ENCODE measurements at regions of chr10 and their contacts with region 1.

Region 1: DNA sequence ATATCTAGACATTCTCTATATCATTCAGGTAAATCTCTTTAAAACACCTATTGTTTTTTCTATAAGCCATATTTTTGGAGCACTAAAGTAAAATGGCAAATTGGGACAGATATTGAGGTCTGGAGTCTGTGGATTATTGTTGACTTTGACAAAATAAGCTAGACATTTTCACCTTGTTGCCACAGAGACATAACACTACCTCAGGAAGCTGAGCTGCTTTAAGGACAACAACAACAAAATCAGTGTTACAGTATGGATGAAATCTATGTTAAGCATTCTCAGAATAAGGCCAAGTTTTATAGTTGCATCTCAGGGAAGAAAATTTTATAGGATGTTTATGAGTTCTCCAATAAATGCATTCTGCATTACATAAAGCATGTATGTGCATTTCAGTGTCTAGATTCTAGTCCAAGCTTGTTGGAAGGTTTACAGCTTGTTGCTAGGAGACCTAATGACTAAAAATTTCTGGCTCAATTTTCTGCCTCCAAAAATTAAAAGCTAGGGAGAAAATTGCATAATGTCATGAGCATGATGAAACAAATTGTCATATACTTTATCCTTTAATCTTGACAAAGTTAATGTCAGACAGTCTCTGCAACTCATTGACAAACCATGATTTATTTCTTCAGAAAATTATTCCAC is 18.3 kb downstream of the LIPM start:
- DNase-seq: no peak
- H3K4me3 ChIP-seq: no peak overlapping the region
- H3K27ac ChIP-seq: no peak overlapping the region
- H3K4me1 ChIP-seq: no peaks in the 10 kb centered on the region
- H3K27me3 ChIP-seq: no peaks in the 10 kb centered on the region
- CTCF ChIP-seq: no peak
- EP300 ChIP-seq: no peak
- POLR2A ChIP-seq: no peak

Region 2: GRCh38 chr10:88721392-88721791 is 99.5 kb before region 1 on chr10:
- in situ Hi-C with region 1: no loop called
- intact Hi-C with region 1: no loop called
- DNase-seq: no peak
- H3K4me3 ChIP-seq: no peak overlapping the region
- H3K27ac ChIP-seq: no peak overlapping the region
- H3K4me1 ChIP-seq: no peaks in the 10 kb centered on the region
- H3K27me3 ChIP-seq: no peaks in the 10 kb centered on the region
- CTCF ChIP-seq: no peak
- EP300 ChIP-seq: no peak
- POLR2A ChIP-seq: no peak

Region 3: DNA sequence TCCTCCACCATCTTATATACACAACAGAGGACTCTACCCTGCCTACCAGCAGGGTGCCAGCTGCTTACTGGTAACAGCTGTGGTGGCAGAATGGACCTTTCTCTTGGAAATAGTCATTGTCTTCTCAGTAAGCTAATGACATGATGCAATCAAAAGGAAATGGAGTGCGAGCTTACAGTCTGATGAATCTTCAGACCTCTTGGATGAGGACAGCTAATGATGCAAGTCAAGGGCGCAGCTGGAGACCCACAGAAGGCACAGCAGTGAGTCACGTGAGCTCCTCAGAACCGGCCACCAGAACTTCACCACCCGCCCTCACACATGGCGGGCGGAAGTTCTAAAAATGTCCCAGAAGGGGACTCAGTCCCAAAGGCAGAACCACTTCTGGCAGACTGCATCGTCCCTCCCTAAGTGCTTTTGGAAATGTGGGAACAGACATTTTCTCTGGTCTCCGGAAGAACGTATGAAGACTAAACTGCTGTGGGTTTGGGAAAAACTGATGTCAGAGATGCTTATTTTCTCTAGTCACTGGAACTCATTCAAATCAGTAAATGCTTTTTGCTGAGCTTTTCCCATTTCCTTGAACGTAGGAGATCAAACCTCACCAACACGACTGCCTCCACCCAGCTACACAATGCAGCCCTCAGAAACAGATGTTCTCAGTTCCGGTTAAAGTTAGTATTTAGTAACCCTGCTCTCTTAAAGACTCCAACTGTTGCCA is 266.1 kb after region 1 on chr10:
- in situ Hi-C with region 1: no loop called
- intact Hi-C with region 1: loop called (anchors 5 kb)
- DNase-seq: peak; percentile 35
- H3K4me3 ChIP-seq: no peak overlapping the region
- H3K27ac ChIP-seq: peak overlapping the region; percentile 46 to 69 (median 54)
- H3K4me1 ChIP-seq: no peaks in the 10 kb centered on the region
- H3K27me3 ChIP-seq: no peaks in the 10 kb centered on the region
- CTCF ChIP-seq: no peak
- EP300 ChIP-seq: no peak
- POLR2A ChIP-seq: no peak